ENCODE measurements at regions of chr4 and their contacts with region 1.

Region 1: DNA sequence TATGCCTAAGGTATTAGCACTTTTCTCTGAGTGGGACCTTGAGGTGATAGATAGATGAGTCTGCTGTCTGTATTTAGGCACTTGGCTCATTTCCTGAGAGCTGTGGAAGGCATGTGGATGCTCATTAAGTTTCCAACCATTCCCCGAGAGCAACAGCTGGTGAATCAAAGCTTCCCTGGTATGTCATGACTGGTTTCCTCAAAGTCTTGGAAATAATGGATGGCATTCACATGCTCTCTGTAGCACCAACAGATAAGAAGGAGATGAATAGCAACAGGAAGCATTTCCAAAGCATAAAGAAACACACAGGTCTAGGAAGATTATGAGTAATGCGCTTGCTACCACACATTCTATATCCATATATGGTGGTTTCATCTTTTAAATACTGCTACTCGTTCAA is 118.3 kb upstream of the ETNPPL start:
- DNase-seq: peak; percentile 85
- H3K4me3 ChIP-seq: no peak overlapping the region
- H3K27ac ChIP-seq: peak overlapping the region; percentile 79
- H3K4me1 ChIP-seq: peaks cover 55% of the 10 kb centered on the region
- H3K27me3 ChIP-seq: peaks cover 0 to 4% of the 10 kb centered on the region in 2 experiments
- CTCF ChIP-seq: no peak
- POLR2A ChIP-seq: no peak

Region 2: GRCh38 chr4:108036213-108036612 is 845.0 kb before region 1 on chr4:
- CTCF ChIA-PET with region 1: no interaction called
- POLR2A ChIA-PET with region 1: no interaction called
- dilution Hi-C with region 1: no loop called
- intact Hi-C with region 1: no loop called
- DNase-seq: no peak
- H3K4me3 ChIP-seq: no peak overlapping the region
- H3K27ac ChIP-seq: no peak overlapping the region
- H3K4me1 ChIP-seq: no peaks in the 10 kb centered on the region
- H3K27me3 ChIP-seq: no peaks in the 10 kb centered on the region
- CTCF ChIP-seq: no peak
- POLR2A ChIP-seq: no peak

Region 3: GRCh38 chr4:108965016-108965415 is 83.8 kb after region 1 on chr4:
- CTCF ChIA-PET with region 1: no interaction called
- POLR2A ChIA-PET with region 1: no interaction called
- dilution Hi-C with region 1: no loop called
- intact Hi-C with region 1: loop called (anchors 1 kb)
- DNase-seq: no peak
- H3K4me3 ChIP-seq: no peak overlapping the region
- H3K27ac ChIP-seq: no peak overlapping the region
- H3K4me1 ChIP-seq: peaks cover 12% of the 10 kb centered on the region
- H3K27me3 ChIP-seq: no peaks in the 10 kb centered on the region
- CTCF ChIP-seq: no peak
- POLR2A ChIP-seq: no peak

Region 4: DNA sequence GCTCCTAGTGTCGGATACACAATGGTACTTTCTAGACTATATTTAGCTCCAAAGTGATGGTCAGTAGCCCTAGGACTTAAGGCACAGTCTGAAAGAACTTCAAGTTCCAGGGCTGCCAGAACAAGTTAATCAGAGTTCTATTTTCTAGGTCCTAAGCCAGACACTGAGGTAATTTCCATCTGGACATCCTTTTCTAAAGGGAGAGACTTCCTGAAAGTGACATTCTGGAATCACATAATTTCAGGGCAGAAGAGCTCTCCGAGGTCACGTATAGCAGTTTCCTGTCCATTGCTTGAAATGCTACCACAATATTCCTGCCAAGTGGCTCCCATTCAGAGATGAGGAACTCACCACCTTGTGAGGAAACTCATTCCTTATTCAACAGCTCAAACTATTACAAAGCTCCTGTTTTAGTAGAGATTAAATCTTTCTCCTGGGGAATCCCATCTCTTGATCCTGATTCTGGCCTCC is 303.3 kb after region 1 on chr4:
- CTCF ChIA-PET with region 1: no interaction called
- POLR2A ChIA-PET with region 1: no interaction called
- dilution Hi-C with region 1: no loop called
- intact Hi-C with region 1: loop called (anchors 1 kb)
- DNase-seq: peak; percentile 78
- H3K4me3 ChIP-seq: no peak overlapping the region
- H3K27ac ChIP-seq: peak overlapping the region; percentile 2
- H3K4me1 ChIP-seq: peaks cover 21% of the 10 kb centered on the region
- H3K27me3 ChIP-seq: no peaks in the 10 kb centered on the region
- CTCF ChIP-seq: no peak
- POLR2A ChIP-seq: no peak

Region 5: DNA sequence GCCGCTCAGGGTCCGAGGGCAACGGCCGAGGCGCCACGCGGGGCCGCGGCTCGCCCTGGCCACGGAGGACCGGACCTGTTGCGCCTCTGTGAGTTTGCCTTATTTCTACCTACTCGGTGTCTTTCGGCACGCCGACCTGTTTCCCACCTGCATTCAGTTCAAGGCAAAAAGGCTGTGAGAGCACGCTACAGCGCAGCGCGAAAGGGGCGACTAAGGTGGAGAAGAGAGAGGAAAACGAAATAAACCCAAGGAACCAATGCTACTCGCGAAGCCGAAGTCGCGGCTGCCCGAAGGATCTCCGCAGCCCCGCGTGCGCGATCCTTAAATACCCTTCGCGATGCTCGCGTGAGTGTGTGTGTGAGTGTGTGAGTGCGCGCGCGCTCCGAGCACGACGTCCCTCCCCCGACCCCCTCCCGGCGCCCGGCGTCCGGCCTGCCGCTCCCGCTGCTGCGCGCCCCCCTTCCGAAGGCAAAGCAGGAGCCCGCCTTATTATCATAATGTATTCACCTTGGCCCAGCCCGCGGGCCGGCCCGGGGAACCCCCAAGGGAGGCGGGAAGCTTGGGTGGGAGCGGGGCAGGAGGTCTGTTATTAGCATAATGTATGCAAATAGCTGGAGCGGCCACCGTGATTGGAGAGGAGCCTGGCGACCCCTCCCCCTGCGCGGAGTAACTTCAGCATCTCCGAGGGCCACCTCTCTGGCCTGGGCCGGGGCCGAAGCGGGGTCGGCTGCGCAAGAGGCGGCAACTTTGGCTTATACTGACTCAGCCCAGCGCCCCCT is 421.4 kb after region 1 on chr4 and contains the start of gene COL25A1:
- CTCF ChIA-PET with region 1: interaction called, 5 read pairs
- POLR2A ChIA-PET with region 1: no interaction called
- dilution Hi-C with region 1: no loop called
- intact Hi-C with region 1: loop called (anchors 2 kb)
- DNase-seq: peak; percentile 60
- H3K4me3 ChIP-seq: peak within 1 kb of the TSS; percentile 12 to 75 (median 38)
- H3K27ac ChIP-seq: no peak within 1 kb of the TSS
- H3K4me1 ChIP-seq: peaks cover 16% of the 10 kb centered on the region
- H3K27me3 ChIP-seq: peaks cover 22 to 42% of the 10 kb centered on the region in 2 experiments
- CTCF ChIP-seq: no peak
- POLR2A ChIP-seq: no peak
- total RNA-seq, gene COL25A1: 3.5 and 3.9 TPM in 2 replicates

Region 6: GRCh38 chr4:109406338-109406931 is 525.2 kb after region 1 on chr4:
- CTCF ChIA-PET with region 1: interaction called, 5 read pairs
- POLR2A ChIA-PET with region 1: no interaction called
- dilution Hi-C with region 1: no loop called
- intact Hi-C with region 1: loop called (anchors 5 kb)
- DNase-seq: peak; percentile 75
- H3K4me3 ChIP-seq: no peak overlapping the region
- H3K27ac ChIP-seq: no peak overlapping the region
- H3K4me1 ChIP-seq: no peaks in the 10 kb centered on the region
- H3K27me3 ChIP-seq: no peaks in the 10 kb centered on the region
- CTCF ChIP-seq: peak; percentile 51 to 53
- POLR2A ChIP-seq: no peak

Region 7: GRCh38 chr4:109462297-109462696 is 581.1 kb after region 1 on chr4:
- CTCF ChIA-PET with region 1: no interaction called
- POLR2A ChIA-PET with region 1: no interaction called
- dilution Hi-C with region 1: no loop called
- intact Hi-C with region 1: no loop called
- DNase-seq: no peak
- H3K4me3 ChIP-seq: no peak overlapping the region
- H3K27ac ChIP-seq: no peak overlapping the region
- H3K4me1 ChIP-seq: no peaks in the 10 kb centered on the region
- H3K27me3 ChIP-seq: no peaks in the 10 kb centered on the region
- CTCF ChIP-seq: no peak
- POLR2A ChIP-seq: no peak

Measured in endothelial cell of umbilical vein (primary cell).